Activated T-helper 1 cell treated with anti-CD3 and anti-CD28 coated beads, Interleukin-12 subunit alpha, Interleukin-12 subunit beta, Interleukin-2, Interleukin-4 antibody, amounts not matched to agents 30 ng/mL and 10 ng/mL and 1 ng/mL, durations not matched to agents 14 hours and 24 hours and 36 hours (primary cell): ENCODE measurements at regions of chr2 and their contacts with region 1.

Region 1: GRCh38 chr2:203578759-203579643 is 43.9 kb upstream of the RAPH1 start:
- DNase-seq: peak; percentile 64
- H3K4me3 Mint-ChIP-seq: peak overlapping the region; percentile 38
- H3K27ac Mint-ChIP-seq: peak overlapping the region; percentile 46
- H3K4me1 Mint-ChIP-seq: peaks cover 49% of the 10 kb centered on the region
- H3K27me3 Mint-ChIP-seq: peaks cover 40% of the 10 kb centered on the region

Region 2: GRCh38 chr2:203535078-203535783 is 43.8 kb before region 1 on chr2 and contains the start of gene RAPH1:
- intact Hi-C with region 1: loop called (anchors 1 kb)
- DNase-seq: peak; percentile 44
- H3K4me3 Mint-ChIP-seq: peak within 1 kb of the TSS; percentile 89
- H3K27ac Mint-ChIP-seq: peak within 1 kb of the TSS; percentile 90
- H3K4me1 Mint-ChIP-seq: peaks cover 30% of the 10 kb centered on the region
- H3K27me3 Mint-ChIP-seq: peaks cover 52% of the 10 kb centered on the region
- total RNA-seq, gene RAPH1: 4.2 and 4.6 TPM in 2 replicates

Region 3: GRCh38 chr2:203673933-203674332 is 94.9 kb after region 1 on chr2:
- intact Hi-C with region 1: loop called (anchors 1 kb)
- DNase-seq: peak; percentile 49
- H3K4me3 Mint-ChIP-seq: peak overlapping the region; percentile 61
- H3K27ac Mint-ChIP-seq: peak overlapping the region; percentile 90
- H3K4me1 Mint-ChIP-seq: peaks cover 33% of the 10 kb centered on the region
- H3K27me3 Mint-ChIP-seq: no peaks in the 10 kb centered on the region

Region 4: GRCh38 chr2:203782262-203782976 is 203.4 kb after region 1 on chr2:
- intact Hi-C with region 1: loop called (anchors 1 kb)
- DNase-seq: peak; percentile 50
- H3K4me3 Mint-ChIP-seq: no peak overlapping the region
- H3K27ac Mint-ChIP-seq: peak overlapping the region; percentile 92
- H3K4me1 Mint-ChIP-seq: peaks cover 63% of the 10 kb centered on the region
- H3K27me3 Mint-ChIP-seq: no peaks in the 10 kb centered on the region

Region 5: GRCh38 chr2:203893401-203893800 is 314.4 kb after region 1 on chr2:
- intact Hi-C with region 1: loop called (anchors 1 kb)
- DNase-seq: no peak
- H3K4me3 Mint-ChIP-seq: no peak overlapping the region
- H3K27ac Mint-ChIP-seq: peak overlapping the region; percentile 89
- H3K4me1 Mint-ChIP-seq: peaks cover 73% of the 10 kb centered on the region
- H3K27me3 Mint-ChIP-seq: no peaks in the 10 kb centered on the region